Heart right ventricle (tissue), 16 donors: ENCODE measurements at regions of chr2 and their contacts with region 1.

Region 1: DNA sequence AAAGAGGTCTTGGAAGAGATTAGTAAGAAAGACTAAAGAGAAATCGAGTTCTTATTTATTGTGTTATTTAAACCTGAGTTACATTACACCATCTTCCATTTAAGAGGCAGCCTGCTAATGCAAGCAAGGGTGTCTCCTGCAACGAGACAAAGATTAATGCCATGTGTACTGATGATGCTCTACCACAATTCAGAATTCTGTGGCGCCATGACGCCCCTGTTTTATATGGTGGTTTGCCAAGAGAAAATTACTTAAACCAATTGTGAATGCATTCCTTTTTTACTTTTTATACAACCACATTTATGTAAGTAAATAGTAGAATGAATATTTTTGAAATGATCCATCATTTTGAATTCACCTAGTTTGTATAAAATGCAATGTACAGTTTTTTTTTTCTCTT is 356.1 kb upstream of the ZEB2 start:
- DNase-seq: no peak
- ATAC-seq: no peak
- H3K4me3 ChIP-seq: no peak overlapping the region
- H3K27ac ChIP-seq: peak overlapping the region in 2 of 10 donors; percentile 2 to 11
- H3K4me1 ChIP-seq: peaks cover 0 to 15% (median 3%) of the 10 kb centered on the region in 9 donors
- H3K27me3 ChIP-seq: no peaks in the 10 kb centered on the region
- CTCF ChIP-seq: no peak

Region 2: DNA sequence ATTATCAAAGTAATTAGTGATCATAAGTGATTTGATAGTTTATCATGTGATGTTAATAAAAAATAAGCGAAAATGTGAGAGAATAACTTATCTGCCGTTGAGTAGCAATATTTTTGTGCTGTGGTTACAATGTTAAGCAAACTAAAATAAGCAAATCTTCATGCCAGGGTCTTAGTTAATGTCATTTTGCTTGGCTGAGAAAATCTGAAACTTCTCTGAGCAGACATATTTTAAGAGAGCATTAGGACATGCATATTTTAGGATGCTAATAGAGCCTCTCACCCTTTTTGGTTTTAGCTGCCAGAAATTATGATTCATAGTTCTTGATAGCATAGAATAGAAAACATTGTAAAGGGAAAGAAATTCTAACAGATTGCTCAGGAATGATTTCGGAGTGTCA is 122.6 kb before region 1 on chr2:
- intact Hi-C with region 1: no loop called
- DNase-seq: no peak
- ATAC-seq: no peak
- H3K4me3 ChIP-seq: no peak overlapping the region
- H3K27ac ChIP-seq: peak overlapping the region in 3 of 10 donors; percentile 11 to 48 (median 21)
- H3K4me1 ChIP-seq: no peaks in the 10 kb centered on the region
- H3K27me3 ChIP-seq: no peaks in the 10 kb centered on the region
- CTCF ChIP-seq: no peak

Region 3: DNA sequence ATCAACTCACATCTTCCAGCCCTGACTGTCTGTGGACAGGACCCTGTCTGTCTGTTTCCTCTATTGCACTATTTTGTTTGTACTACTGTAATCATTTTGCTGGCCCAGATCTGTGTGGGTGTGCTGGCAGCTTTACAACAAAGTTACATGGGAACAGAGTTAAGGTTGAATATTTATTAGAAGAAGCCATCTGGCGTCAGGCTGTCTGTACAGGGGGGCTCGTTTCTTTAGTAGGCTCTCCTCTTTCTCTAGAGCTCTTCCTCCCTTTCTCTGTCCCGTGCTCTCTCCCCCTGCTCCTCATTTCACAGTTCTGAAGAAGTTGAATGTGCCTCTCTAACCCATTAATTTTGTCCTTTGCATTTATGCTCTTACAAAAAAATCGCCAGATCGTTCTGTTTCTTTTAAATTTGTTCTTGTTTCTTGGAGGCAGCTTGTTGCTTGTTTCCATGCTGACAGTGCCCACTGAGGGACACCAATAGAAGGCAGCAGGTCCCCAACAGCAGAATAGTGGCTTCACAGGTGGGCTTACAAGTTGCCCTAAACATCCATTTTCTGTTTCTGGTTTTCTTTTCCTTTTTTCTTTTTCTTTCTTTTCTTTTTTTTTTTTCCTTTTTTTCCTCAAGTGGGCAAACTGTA is 40.9 kb before region 1 on chr2:
- intact Hi-C with region 1: loop called in 1 of 10 experiments (anchors 5 kb)
- DNase-seq: peak; percentile 8 to 58
- ATAC-seq: peak in 7 of 8 donors; percentile 67 to 86 (median 79)
- H3K4me3 ChIP-seq: no peak overlapping the region
- H3K27ac ChIP-seq: peak overlapping the region in 8 of 10 donors; percentile 33 to 78 (median 55)
- H3K4me1 ChIP-seq: peaks cover 0 to 29% (median 5%) of the 10 kb centered on the region in 9 donors
- H3K27me3 ChIP-seq: no peaks in the 10 kb centered on the region
- CTCF ChIP-seq: no peak

Region 4: GRCh38 chr2:144894612-144895599 is 18.9 kb after region 1 on chr2:
- intact Hi-C with region 1: no loop called
- DNase-seq: no peak
- ATAC-seq: no peak
- H3K4me3 ChIP-seq: no peak overlapping the region
- H3K27ac ChIP-seq: no peak overlapping the region
- H3K4me1 ChIP-seq: peaks cover 0 to 9% (median 0%) of the 10 kb centered on the region in 9 donors
- H3K27me3 ChIP-seq: no peaks in the 10 kb centered on the region
- CTCF ChIP-seq: no peak

Region 5: DNA sequence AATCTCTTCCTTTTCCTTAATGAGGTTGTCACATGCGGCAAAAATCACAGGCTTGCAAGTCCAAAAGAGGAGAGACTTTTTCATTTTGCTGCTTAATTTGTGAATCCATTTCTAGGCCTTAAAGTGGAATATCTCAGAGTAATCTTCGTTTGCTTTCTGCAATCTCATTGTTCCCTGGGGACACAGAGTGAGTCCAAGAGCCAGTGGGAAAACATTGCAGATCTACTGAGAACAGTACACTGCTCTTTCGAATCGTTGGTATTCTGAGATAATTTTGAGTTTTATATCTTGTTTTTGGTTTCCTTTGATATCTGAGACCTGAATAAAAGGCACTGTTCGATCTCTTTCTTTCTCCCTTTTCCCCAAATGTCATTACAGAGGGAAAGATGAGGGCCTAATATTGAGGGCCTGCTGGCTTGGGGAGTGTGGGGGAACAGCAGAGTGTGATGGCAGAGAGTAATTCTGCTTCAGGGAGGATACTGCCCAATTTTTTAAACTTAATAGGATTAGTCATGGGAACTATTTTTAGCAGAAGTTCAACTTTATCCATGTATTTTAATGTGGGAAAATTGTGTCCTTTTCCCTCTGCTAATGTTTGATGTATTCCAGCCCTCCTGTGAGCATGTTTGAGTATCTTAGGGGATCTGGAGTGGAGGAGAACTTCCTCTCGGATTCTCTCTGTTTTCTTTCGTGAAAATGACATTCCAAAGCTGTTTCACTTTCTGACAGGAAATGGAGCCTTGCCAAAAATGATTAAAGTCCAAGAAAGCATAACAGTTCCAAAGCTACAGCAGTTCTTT is 62.1 kb after region 1 on chr2:
- intact Hi-C with region 1: loop called in 2 of 10 experiments (anchors 2 to 10 kb)
- DNase-seq: peak in 1 of 2 donors; percentile 50
- ATAC-seq: peak; percentile 79 to 91 (median 84)
- H3K4me3 ChIP-seq: no peak overlapping the region
- H3K27ac ChIP-seq: peak overlapping the region; percentile 39 to 81 (median 70)
- H3K4me1 ChIP-seq: peaks cover 0 to 50% (median 29%) of the 10 kb centered on the region in 9 donors
- H3K27me3 ChIP-seq: no peaks in the 10 kb centered on the region
- CTCF ChIP-seq: no peak

Region 6: GRCh38 chr2:144996225-144996795 is 120.3 kb after region 1 on chr2:
- intact Hi-C with region 1: loop called in 1 of 10 experiments (anchors 10 kb)
- DNase-seq: no peak
- ATAC-seq: no peak
- H3K4me3 ChIP-seq: peak overlapping the region in 3 of 10 donors; percentile 2 to 21 (median 14)
- H3K27ac ChIP-seq: peak overlapping the region in 9 of 10 donors; percentile 16 to 77 (median 65)
- H3K4me1 ChIP-seq: peaks cover 0 to 22% (median 4%) of the 10 kb centered on the region in 9 donors
- H3K27me3 ChIP-seq: no peaks in the 10 kb centered on the region
- CTCF ChIP-seq: no peak